ENCODE measurements at regions of chr19 and their contacts with region 1.

Region 1: GRCh38 chr19:40785526-40785925 is 7.5 kb downstream of the RAB4B start:
- DNase-seq: no peak
- H3K4me3 ChIP-seq: no peak overlapping the region
- CTCF ChIP-seq: no peak

Region 2: DNA sequence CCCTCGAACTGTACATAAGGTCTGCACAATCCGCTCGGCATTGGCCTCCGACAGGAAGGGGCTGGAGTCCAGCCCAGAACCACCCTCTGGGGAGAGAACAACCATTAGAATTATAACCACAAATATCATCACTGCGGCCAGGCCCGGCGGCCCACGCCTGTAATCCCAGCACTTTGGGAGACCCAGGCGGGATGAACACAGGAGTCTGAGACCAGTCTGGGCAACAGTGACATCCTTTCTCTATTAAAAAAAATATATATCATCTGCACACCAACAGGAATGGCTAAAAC is 80.2 kb before region 1 on chr19:
- CTCF ChIA-PET with region 1: no interaction called
- POLR2A ChIA-PET with region 1: no interaction called
- DNase-seq: no peak
- H3K4me3 ChIP-seq: no peak overlapping the region
- CTCF ChIP-seq: no peak

Region 3: GRCh38 chr19:40762754-40763470 is 22.6 kb before region 1 on chr19:
- CTCF ChIA-PET with region 1: no interaction called
- POLR2A ChIA-PET with region 1: no interaction called
- DNase-seq: no peak
- H3K4me3 ChIP-seq: no peak overlapping the region
- CTCF ChIP-seq: no peak

Region 4: DNA sequence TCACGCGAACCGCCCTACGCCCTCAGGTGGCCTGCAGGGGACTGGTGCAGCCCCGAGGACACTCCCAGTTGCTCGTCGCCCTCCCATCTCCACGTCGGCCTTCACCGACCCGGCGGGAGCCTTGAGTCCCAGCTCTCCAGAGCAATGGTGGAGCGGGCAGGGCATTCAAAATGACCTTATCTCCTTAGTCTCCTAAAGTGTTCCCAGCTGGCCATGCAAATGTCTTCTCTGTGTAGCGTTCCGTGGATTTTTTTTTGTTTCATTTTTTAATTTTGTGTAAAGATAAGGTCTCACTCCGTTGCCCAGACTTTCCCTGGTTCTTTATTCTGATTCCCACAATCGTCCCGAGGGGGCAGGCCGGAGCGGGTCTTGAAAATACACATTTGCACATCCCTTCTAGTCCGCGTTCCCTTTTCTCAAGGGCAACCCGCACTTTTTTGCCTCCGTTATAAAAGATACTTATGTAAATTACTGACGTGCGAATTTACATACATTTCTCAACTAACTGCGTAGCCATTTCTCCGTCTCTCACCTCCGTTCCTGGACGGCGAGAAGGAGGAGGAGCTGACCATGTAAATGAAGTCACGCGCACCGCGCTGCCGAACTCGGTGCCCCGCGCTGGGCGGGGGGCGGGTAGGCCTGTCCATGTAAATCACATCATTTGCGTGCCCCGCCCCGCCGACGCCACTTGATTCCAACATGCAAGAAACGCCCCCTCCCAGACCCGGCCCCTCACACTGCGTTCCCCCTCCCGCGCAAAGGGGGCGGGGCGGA is 12.9 kb after region 1 on chr19:
- CTCF ChIA-PET with region 1: interaction called, 23 read pairs
- POLR2A ChIA-PET with region 1: interaction called, 4 read pairs
- DNase-seq: peak; percentile 97
- H3K4me3 ChIP-seq: peak overlapping the region; percentile 65
- CTCF ChIP-seq: peak; percentile 36